ENCODE measurements at regions of chr3 and their contacts with region 1.

Region 1: GRCh38 chr3:9731206-9732079 is at the start of gene BRPF1:
- DNase-seq: peak; percentile 98 to 100 (median 98)
- H3K4me3 ChIP-seq: peak within 1 kb of the TSS; percentile 48 to 96
- H3K4me3 Mint-ChIP-seq: peak within 1 kb of the TSS; percentile 89 to 98 (median 93)
- H3K27ac ChIP-seq: peak within 1 kb of the TSS; percentile 77
- H3K27ac Mint-ChIP-seq: peak within 1 kb of the TSS; percentile 93 to 98 (median 95)
- H3K4me1 ChIP-seq: peaks cover 64% of the 10 kb centered on the region
- H3K4me1 Mint-ChIP-seq: peaks cover 47 to 75% (median 59%) of the 10 kb centered on the region in 4 donors
- H3K27me3 ChIP-seq: no peaks in the 10 kb centered on the region
- H3K27me3 Mint-ChIP-seq: no peaks in the 10 kb centered on the region
- total RNA-seq, gene BRPF1: 40.4 to 40.5 TPM

Region 2: GRCh38 chr3:9352917-9353752 is 378.3 kb before region 1 on chr3:
- CTCF ChIA-PET with region 1: interaction called, 13 read pairs
- POLR2A ChIA-PET with region 1: no interaction called
- intact Hi-C with region 1: loop called (anchors 1 kb)
- DNase-seq: peak; percentile 45 to 61 (median 55)
- H3K4me3 ChIP-seq: no peak overlapping the region
- H3K4me3 Mint-ChIP-seq: no peak overlapping the region
- H3K27ac ChIP-seq: no peak overlapping the region
- H3K27ac Mint-ChIP-seq: peak overlapping the region in 1 of 7 donors; percentile 26
- H3K4me1 ChIP-seq: no peaks in the 10 kb centered on the region
- H3K4me1 Mint-ChIP-seq: peaks cover 10 to 16% (median 13%) of the 10 kb centered on the region in 4 donors
- H3K27me3 ChIP-seq: no peaks in the 10 kb centered on the region
- H3K27me3 Mint-ChIP-seq: no peaks in the 10 kb centered on the region

Region 3: GRCh38 chr3:9503283-9503682 is 228.2 kb before region 1 on chr3:
- CTCF ChIA-PET with region 1: interaction called, 19 read pairs
- POLR2A ChIA-PET with region 1: no interaction called
- intact Hi-C with region 1: no loop called
- DNase-seq: peak; percentile 51 to 64 (median 60)
- H3K4me3 ChIP-seq: no peak overlapping the region
- H3K4me3 Mint-ChIP-seq: no peak overlapping the region
- H3K27ac ChIP-seq: no peak overlapping the region
- H3K27ac Mint-ChIP-seq: no peak overlapping the region
- H3K4me1 ChIP-seq: peaks cover 13% of the 10 kb centered on the region
- H3K4me1 Mint-ChIP-seq: peaks cover 2 to 14% (median 6%) of the 10 kb centered on the region in 4 donors
- H3K27me3 ChIP-seq: peaks cover 17% of the 10 kb centered on the region
- H3K27me3 Mint-ChIP-seq: peaks cover 20 to 26% of the 10 kb centered on the region in 2 donors

Region 4: GRCh38 chr3:9749645-9750555 is 18.5 kb after region 1 on chr3 and contains the start of gene OGG1:
- CTCF ChIA-PET with region 1: interaction called, 17 read pairs
- POLR2A ChIA-PET with region 1: interaction called, 60 read pairs
- intact Hi-C with region 1: loop called (anchors 1 kb)
- DNase-seq: peak; percentile 95 to 98 (median 96)
- H3K4me3 ChIP-seq: peak within 1 kb of the TSS; percentile 58 to 92
- H3K4me3 Mint-ChIP-seq: peak within 1 kb of the TSS; percentile 88 to 98 (median 96)
- H3K27ac ChIP-seq: peak within 1 kb of the TSS; percentile 59
- H3K27ac Mint-ChIP-seq: peak within 1 kb of the TSS; percentile 93 to 98 (median 95)
- H3K4me1 ChIP-seq: peaks cover 38% of the 10 kb centered on the region
- H3K4me1 Mint-ChIP-seq: peaks cover 25 to 54% (median 39%) of the 10 kb centered on the region in 4 donors
- H3K27me3 ChIP-seq: no peaks in the 10 kb centered on the region
- H3K27me3 Mint-ChIP-seq: no peaks in the 10 kb centered on the region
- total RNA-seq, gene OGG1: 40.4 to 46.9 TPM

Region 5: DNA sequence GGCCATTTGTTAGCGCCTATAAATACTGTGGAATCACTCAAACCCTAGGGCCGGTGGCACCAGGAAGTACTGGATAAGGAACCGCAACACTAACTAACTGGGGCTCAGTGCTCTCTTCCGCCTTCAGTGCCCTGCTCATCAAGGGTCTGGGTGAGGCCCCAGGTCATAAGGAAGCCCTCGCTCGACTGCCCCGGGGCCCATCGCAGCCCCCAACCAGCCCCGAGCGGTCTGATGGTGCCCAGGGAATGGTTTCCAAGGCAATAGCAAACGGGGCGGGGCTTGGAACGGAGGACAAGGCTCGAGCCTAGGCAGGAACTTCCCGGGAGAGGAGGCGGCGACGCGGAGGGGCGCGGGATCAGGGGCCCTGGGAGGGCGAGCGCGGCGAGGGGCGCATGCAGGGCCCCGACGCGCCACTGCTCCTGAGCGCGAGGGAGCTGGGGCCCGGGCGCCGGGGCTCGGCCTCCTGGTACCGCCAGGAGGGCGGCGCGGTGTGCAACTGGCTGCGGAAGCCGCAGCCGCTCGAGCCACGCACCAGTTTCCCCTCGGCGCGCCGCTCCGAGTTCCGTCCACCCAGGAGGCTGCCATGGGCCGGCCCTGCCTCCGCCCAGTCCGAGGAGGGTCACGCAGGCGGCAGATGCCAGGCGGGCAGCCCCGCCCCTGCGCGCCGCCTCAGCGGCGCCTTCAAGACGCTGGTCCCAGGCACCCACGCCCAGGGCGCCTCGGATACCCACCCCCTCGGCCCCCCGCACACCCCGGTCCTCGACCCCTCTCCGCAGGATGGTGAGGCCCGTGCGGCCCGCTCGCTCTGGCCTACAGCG is 78.4 kb after region 1 on chr3 and contains the start of gene TTLL3:
- CTCF ChIA-PET with region 1: interaction called, 5 read pairs
- POLR2A ChIA-PET with region 1: interaction called, 5 read pairs
- intact Hi-C with region 1: loop called (anchors 2 kb)
- DNase-seq: peak; percentile 34 to 62 (median 48)
- H3K4me3 ChIP-seq: peak within 1 kb of the TSS; percentile 72
- H3K4me3 Mint-ChIP-seq: peak within 1 kb of the TSS; percentile 91 to 94 (median 92)
- H3K27ac ChIP-seq: peak within 1 kb of the TSS; percentile 74
- H3K27ac Mint-ChIP-seq: peak within 1 kb of the TSS; percentile 87 to 99 (median 98)
- H3K4me1 ChIP-seq: peaks cover 27% of the 10 kb centered on the region
- H3K4me1 Mint-ChIP-seq: peaks cover 35 to 46% (median 41%) of the 10 kb centered on the region in 4 donors
- H3K27me3 ChIP-seq: no peaks in the 10 kb centered on the region
- H3K27me3 Mint-ChIP-seq: no peaks in the 10 kb centered on the region
- total RNA-seq, gene TTLL3: 81.4 to 91.7 TPM

Region 6: DNA sequence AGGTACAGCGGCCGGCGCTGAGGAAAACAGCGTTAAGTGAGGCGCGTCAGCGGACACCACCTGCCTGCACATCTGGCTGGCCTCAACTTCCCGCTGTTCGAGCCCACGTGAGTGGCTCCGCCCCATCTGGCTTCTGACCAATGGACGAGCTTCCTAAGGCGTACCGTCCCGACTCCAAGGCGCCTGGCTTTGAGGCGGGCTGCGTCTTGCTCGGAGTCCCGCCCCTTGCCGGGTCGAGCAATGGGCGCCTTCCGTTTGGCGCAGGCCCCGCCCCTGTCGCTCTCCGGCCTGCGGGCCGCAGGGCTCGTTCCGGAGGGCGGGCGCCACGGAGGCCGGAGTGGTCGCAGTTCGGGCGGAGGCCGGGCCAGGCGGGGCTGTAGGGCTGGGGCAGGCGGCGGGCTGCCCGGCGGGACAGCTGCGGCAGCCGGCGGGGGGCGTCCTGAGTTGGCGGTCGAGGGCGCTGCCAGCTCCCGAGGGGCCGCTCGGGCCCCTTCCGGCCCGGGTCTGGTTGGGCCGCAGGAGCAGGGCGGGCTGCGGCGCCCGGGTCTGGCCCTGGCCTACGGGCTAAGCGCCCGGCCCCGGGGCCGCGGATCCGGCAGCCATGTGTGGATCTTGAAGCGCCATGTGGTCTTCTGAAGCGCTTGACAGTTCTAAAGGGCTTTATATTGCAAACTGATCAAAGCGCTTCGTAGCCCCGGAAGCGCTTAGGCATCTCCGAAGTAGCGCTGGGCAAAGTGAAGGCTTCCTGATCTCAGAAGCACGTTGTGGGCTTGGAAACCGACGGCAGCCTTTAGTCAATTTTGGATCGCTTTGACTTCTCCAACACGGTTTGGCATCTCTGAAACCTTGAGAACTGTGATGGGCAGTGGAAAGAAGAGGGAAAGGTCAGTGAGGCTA is 517.0 kb after region 1 on chr3 and contains the start of gene TATDN2:
- CTCF ChIA-PET with region 1: no interaction called
- POLR2A ChIA-PET with region 1: no interaction called
- intact Hi-C with region 1: loop called (anchors 1 kb)
- DNase-seq: peak; percentile 89 to 93 (median 92)
- H3K4me3 ChIP-seq: peak within 1 kb of the TSS; percentile 23 to 99
- H3K4me3 Mint-ChIP-seq: peak within 1 kb of the TSS; percentile 97 to 99 (median 99)
- H3K27ac ChIP-seq: peak within 1 kb of the TSS; percentile 78
- H3K27ac Mint-ChIP-seq: peak within 1 kb of the TSS; percentile 95 to 98 (median 97)
- H3K4me1 ChIP-seq: peaks cover 49% of the 10 kb centered on the region
- H3K4me1 Mint-ChIP-seq: peaks cover 35 to 65% (median 54%) of the 10 kb centered on the region in 4 donors
- H3K27me3 ChIP-seq: no peaks in the 10 kb centered on the region
- H3K27me3 Mint-ChIP-seq: no peaks in the 10 kb centered on the region
- total RNA-seq, gene TATDN2: 76.1 to 79.3 TPM

Region 7: GRCh38 chr3:10273702-10274305 is 542.4 kb after region 1 on chr3:
- CTCF ChIA-PET with region 1: no interaction called
- POLR2A ChIA-PET with region 1: no interaction called
- intact Hi-C with region 1: no loop called
- DNase-seq: no peak
- H3K4me3 ChIP-seq: no peak overlapping the region
- H3K4me3 Mint-ChIP-seq: peak overlapping the region in 7 of 8 donors; percentile 26 to 71 (median 58)
- H3K27ac ChIP-seq: no peak overlapping the region
- H3K27ac Mint-ChIP-seq: peak overlapping the region; percentile 68 to 87 (median 79)
- H3K4me1 ChIP-seq: peaks cover 46% of the 10 kb centered on the region
- H3K4me1 Mint-ChIP-seq: peaks cover 24 to 68% (median 44%) of the 10 kb centered on the region in 4 donors
- H3K27me3 ChIP-seq: no peaks in the 10 kb centered on the region
- H3K27me3 Mint-ChIP-seq: no peaks in the 10 kb centered on the region